Activated CD8-positive, alpha-beta T cell treated with anti-CD3 and anti-CD28 coated beads, Interleukin-2, amount 10 ng/mL, durations not matched to agents 7 days and 5 days (primary cell): ENCODE measurements at regions of chr2 and their contacts with region 1.

Region 1: DNA sequence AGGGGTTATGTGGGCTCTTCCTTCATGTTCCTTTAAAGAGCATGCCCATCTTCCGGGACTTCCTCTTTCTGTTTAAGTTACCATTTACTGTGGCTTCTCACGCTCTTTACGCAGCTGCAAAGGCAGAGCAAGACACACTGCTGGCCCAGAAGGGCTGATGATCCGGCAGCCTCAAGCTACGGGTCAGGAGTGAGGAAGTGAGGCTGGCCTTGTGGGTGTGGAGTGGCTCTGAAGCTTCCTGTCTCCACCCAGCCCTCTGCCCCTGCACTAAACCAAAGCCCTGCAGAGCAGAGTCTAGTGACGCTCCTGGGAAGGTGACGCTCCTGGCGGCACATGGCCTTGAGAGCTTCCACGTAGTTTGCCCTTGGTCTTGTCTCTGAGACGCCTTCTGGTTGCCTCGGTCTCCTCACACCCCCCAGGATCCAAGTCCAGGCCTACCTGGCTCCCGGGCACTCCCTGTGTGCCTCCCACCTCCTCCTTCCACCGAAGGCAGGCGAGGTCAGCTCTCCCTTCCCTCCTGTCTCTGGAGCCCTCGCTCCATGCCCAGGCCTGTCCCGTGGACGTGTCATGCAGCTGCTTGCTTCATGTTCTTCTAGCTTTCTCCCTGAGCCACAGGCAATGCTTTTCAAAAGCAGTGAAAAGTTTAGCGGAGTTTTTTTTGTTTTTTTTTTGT is 50.3 kb downstream of the ARL4C start:
- DNase-seq: peak; percentile 94
- ATAC-seq: peak; percentile 90
- H3K4me3 Mint-ChIP-seq: peak overlapping the region; percentile 66
- H3K27ac Mint-ChIP-seq: peak overlapping the region; percentile 99
- H3K4me1 Mint-ChIP-seq: peaks cover 86% of the 10 kb centered on the region
- H3K27me3 Mint-ChIP-seq: no peaks in the 10 kb centered on the region

Region 2: DNA sequence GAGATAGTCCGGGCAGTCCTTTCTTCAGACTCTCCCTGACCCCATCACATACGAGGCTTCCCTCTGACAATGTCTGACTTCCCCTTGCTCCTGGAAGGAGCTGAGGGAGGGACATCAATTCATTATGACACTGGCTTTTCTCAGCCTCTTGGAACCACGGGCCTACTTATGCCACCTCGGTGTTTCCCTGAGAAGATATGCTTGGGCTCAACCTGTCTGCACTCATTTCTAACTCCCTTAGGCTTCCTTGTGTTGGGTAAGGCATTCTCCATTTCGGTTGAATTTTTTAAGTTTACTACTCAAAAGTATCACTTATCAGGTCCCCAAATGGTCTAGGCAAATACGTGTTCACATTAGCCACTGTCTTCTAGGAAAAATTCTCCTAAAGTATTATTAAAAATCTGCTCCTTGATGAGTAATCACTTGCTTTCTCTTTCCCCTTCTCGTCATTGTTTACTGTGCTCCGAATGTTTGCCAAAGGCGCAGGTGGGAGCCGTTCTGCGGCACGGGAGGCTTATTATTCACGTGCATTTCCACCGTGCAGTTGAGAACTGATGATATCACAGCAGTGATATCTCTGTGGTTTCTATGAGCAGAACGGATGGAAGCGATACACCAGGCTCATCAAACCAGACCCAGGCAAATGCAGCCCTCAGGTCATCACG is 17.2 kb after region 1 on chr2:
- CTCF ChIA-PET with region 1: interaction called, 12 read pairs
- POLR2A ChIA-PET with region 1: interaction called, 7 read pairs
- DNase-seq: peak; percentile 76
- ATAC-seq: peak; percentile 85
- H3K4me3 Mint-ChIP-seq: peak overlapping the region; percentile 60
- H3K27ac Mint-ChIP-seq: peak overlapping the region; percentile 81
- H3K4me1 Mint-ChIP-seq: peaks cover 55% of the 10 kb centered on the region
- H3K27me3 Mint-ChIP-seq: no peaks in the 10 kb centered on the region

Region 3: GRCh38 chr2:234488913-234489451 is 42.4 kb after region 1 on chr2:
- CTCF ChIA-PET with region 1: interaction called, 7 read pairs
- POLR2A ChIA-PET with region 1: interaction called, 220 read pairs
- DNase-seq: peak; percentile 91
- ATAC-seq: peak; percentile 77
- H3K4me3 Mint-ChIP-seq: peak overlapping the region; percentile 77
- H3K27ac Mint-ChIP-seq: peak overlapping the region; percentile 97
- H3K4me1 Mint-ChIP-seq: peaks cover 88% of the 10 kb centered on the region
- H3K27me3 Mint-ChIP-seq: no peaks in the 10 kb centered on the region